ENCODE measurements at regions of chr19 and their contacts with region 1.

Region 1: DNA sequence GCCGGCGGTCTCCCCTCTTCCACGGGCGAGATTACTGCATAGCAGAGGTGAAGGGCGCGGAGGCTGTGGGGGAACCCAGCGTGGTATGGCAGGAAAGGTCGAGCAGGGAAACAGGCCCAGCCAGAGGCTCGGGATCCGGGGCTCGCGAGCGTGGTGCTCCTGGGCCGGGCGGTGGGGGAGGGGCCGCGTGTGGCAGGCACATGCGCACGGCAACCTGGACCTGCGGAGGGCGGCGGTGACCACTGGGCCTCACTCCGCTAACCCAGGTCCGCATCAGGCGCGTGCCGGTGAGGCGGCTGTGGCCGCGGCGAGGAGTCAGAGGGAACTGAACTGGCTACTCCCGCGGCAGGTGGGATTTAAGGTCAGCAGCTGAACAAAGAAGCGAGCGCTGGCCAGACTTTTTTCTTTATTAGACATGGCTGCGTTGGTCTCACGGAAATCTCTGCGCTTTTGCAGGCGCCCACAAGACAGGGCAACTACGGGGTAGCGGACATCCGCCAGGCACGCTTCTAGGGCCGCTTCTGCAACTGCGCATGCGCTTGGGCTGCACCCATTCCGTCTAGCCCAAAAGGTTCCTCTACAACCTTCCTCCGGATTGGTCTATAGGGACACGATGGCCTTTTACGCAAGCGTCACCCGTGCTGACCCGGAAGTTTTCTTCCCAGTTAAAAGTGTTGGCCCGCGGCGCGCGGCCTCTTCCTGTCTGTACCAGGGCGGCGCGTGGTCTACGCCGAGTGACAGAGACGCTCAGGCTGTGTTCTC is at the start of gene RPS5:
- DNase-seq: peak; percentile 92 to 100 (median 95)
- ATAC-seq: peak; percentile 88
- H3K4me3 ChIP-seq: peak within 1 kb of the TSS; percentile 88 to 90
- H3K4me3 Mint-ChIP-seq: peak within 1 kb of the TSS; percentile 93
- H3K27ac ChIP-seq: peak within 1 kb of the TSS; percentile 94 to 98
- H3K27ac Mint-ChIP-seq: peak within 1 kb of the TSS; percentile 99
- H3K4me1 ChIP-seq: peaks cover 41% of the 10 kb centered on the region
- H3K4me1 Mint-ChIP-seq: peaks cover 52% of the 10 kb centered on the region
- H3K27me3 ChIP-seq: no peaks in the 10 kb centered on the region
- H3K27me3 Mint-ChIP-seq: no peaks in the 10 kb centered on the region
- CTCF ChIP-seq: no peak
- total RNA-seq, gene RPS5: 1,884 to 1,887 TPM

Region 2: GRCh38 chr19:58182989-58183816 is 203.6 kb before region 1 on chr19 and contains the start of gene ZNF274:
- CTCF ChIA-PET with region 1: no interaction called
- POLR2A ChIA-PET with region 1: no interaction called
- intact Hi-C with region 1: loop called (anchors 1 kb)
- DNase-seq: peak; percentile 88 to 96 (median 94)
- ATAC-seq: peak; percentile 86
- H3K4me3 ChIP-seq: peak within 1 kb of the TSS; percentile 90 to 94
- H3K4me3 Mint-ChIP-seq: peak within 1 kb of the TSS; percentile 91
- H3K27ac ChIP-seq: peak within 1 kb of the TSS; percentile 99 to 100
- H3K27ac Mint-ChIP-seq: peak within 1 kb of the TSS; percentile 100
- H3K4me1 ChIP-seq: peaks cover 9% of the 10 kb centered on the region
- H3K4me1 Mint-ChIP-seq: peaks cover 22% of the 10 kb centered on the region
- H3K27me3 ChIP-seq: no peaks in the 10 kb centered on the region
- H3K27me3 Mint-ChIP-seq: no peaks in the 10 kb centered on the region
- CTCF ChIP-seq: no peak
- total RNA-seq, gene ZNF274: 52.7 to 58.9 TPM

Region 3: GRCh38 chr19:58218899-58219298 is 167.9 kb before region 1 on chr19:
- CTCF ChIA-PET with region 1: no interaction called
- POLR2A ChIA-PET with region 1: no interaction called
- intact Hi-C with region 1: no loop called
- DNase-seq: peak in 5 of 9 experiments; percentile 15 to 47 (median 36)
- ATAC-seq: no peak
- H3K4me3 ChIP-seq: no peak overlapping the region
- H3K4me3 Mint-ChIP-seq: no peak overlapping the region
- H3K27ac ChIP-seq: no peak overlapping the region
- H3K27ac Mint-ChIP-seq: no peak overlapping the region
- H3K4me1 ChIP-seq: no peaks in the 10 kb centered on the region
- H3K4me1 Mint-ChIP-seq: no peaks in the 10 kb centered on the region
- H3K27me3 ChIP-seq: peaks cover 0 to 2% of the 10 kb centered on the region in 2 experiments
- H3K27me3 Mint-ChIP-seq: no peaks in the 10 kb centered on the region
- CTCF ChIP-seq: peak; percentile 26

Region 4: GRCh38 chr19:58296104-58296503 is 90.7 kb before region 1 on chr19:
- CTCF ChIA-PET with region 1: no interaction called
- POLR2A ChIA-PET with region 1: no interaction called
- intact Hi-C with region 1: no loop called
- DNase-seq: no peak
- ATAC-seq: no peak
- H3K4me3 ChIP-seq: no peak overlapping the region
- H3K4me3 Mint-ChIP-seq: no peak overlapping the region
- H3K27ac ChIP-seq: no peak overlapping the region
- H3K27ac Mint-ChIP-seq: no peak overlapping the region
- H3K4me1 ChIP-seq: no peaks in the 10 kb centered on the region
- H3K4me1 Mint-ChIP-seq: no peaks in the 10 kb centered on the region
- H3K27me3 ChIP-seq: no peaks in the 10 kb centered on the region
- H3K27me3 Mint-ChIP-seq: no peaks in the 10 kb centered on the region
- CTCF ChIP-seq: no peak

Region 5: GRCh38 chr19:58451358-58452101 is 64.8 kb after region 1 on chr19 and contains the start of gene ZNF324B:
- CTCF ChIA-PET with region 1: no interaction called
- POLR2A ChIA-PET with region 1: no interaction called
- intact Hi-C with region 1: loop called (anchors 1 kb)
- DNase-seq: peak; percentile 92 to 98 (median 96)
- ATAC-seq: peak; percentile 96
- H3K4me3 ChIP-seq: peak within 1 kb of the TSS; percentile 55 to 83
- H3K4me3 Mint-ChIP-seq: peak within 1 kb of the TSS; percentile 82
- H3K27ac ChIP-seq: peak within 1 kb of the TSS; percentile 44 to 70
- H3K27ac Mint-ChIP-seq: peak within 1 kb of the TSS; percentile 27
- H3K4me1 ChIP-seq: peaks cover 10% of the 10 kb centered on the region
- H3K4me1 Mint-ChIP-seq: peaks cover 16% of the 10 kb centered on the region
- H3K27me3 ChIP-seq: peaks cover 0 to 9% of the 10 kb centered on the region in 2 experiments
- H3K27me3 Mint-ChIP-seq: peaks cover 9% of the 10 kb centered on the region
- CTCF ChIP-seq: no peak
- total RNA-seq, gene ZNF324B: 6.2 to 6.5 TPM

Measured in CD8-positive, alpha-beta T cell (primary cell).